Activated CD4-positive, alpha-beta T cell treated with anti-CD3 and anti-CD28 coated beads, Interleukin-2, amount 10 ng/mL, durations not matched to agents 24 days and 14 days (primary cell): ENCODE measurements at regions of chr7 and their contacts with region 1.

Region 1: GRCh38 chr7:33109005-33109757 is at the start of gene RP9:
- DNase-seq: peak; percentile 94
- H3K4me3 Mint-ChIP-seq: peak within 1 kb of the TSS; percentile 97
- H3K27ac Mint-ChIP-seq: peak within 1 kb of the TSS; percentile 84
- H3K4me1 Mint-ChIP-seq: peaks cover 25% of the 10 kb centered on the region
- H3K27me3 Mint-ChIP-seq: peaks cover 28% of the 10 kb centered on the region
- total RNA-seq, gene RP9: 23.2 and 25.1 TPM in 2 replicates

Region 2: DNA sequence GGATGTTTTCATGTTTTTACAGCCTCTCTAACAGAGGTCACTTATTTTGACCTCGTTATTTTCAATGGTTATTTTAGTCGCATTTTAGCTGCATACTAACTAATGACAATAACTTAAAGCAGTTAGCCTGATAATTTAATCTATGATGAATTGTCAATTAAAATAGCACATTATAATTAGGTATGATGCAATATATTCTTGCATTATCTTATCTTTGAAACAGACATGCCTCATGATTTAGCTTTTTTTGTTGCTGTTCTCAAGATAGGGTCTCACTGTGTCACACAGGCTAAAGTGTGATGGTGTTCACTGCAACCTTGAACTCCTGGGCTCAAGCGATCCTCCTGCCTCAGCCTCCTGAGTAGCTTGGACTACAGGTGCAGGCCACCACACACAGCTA is 344.0 kb before region 1 on chr7:
- intact Hi-C with region 1: loop called (anchors 2 kb)
- DNase-seq: no peak
- H3K4me3 Mint-ChIP-seq: no peak overlapping the region
- H3K27ac Mint-ChIP-seq: no peak overlapping the region
- H3K4me1 Mint-ChIP-seq: peaks cover 4% of the 10 kb centered on the region
- H3K27me3 Mint-ChIP-seq: peaks cover 66% of the 10 kb centered on the region

Region 3: DNA sequence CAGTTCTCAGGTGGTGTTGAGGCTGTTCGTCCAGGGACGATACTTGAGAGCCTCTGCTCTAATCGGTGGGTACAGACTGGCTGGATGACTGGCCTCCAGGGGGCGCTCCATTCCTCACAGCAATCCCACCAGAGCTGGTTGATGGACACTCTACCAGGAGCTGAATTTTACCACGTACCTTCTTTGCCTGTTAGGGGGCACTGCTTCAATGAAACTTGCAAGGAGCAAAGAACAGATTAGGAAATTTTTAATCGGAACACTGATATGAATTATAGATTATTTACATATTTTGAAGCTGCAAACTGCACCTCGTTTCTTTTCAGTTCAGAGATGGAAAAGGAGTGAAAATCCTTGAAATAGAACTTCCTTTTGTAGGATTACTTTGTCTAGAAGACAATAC is 262.5 kb before region 1 on chr7:
- intact Hi-C with region 1: loop called (anchors 1 kb)
- DNase-seq: peak; percentile 95
- H3K4me3 Mint-ChIP-seq: peak overlapping the region; percentile 26
- H3K27ac Mint-ChIP-seq: no peak overlapping the region
- H3K4me1 Mint-ChIP-seq: peaks cover 9% of the 10 kb centered on the region
- H3K27me3 Mint-ChIP-seq: peaks cover 27% of the 10 kb centered on the region

Region 4: DNA sequence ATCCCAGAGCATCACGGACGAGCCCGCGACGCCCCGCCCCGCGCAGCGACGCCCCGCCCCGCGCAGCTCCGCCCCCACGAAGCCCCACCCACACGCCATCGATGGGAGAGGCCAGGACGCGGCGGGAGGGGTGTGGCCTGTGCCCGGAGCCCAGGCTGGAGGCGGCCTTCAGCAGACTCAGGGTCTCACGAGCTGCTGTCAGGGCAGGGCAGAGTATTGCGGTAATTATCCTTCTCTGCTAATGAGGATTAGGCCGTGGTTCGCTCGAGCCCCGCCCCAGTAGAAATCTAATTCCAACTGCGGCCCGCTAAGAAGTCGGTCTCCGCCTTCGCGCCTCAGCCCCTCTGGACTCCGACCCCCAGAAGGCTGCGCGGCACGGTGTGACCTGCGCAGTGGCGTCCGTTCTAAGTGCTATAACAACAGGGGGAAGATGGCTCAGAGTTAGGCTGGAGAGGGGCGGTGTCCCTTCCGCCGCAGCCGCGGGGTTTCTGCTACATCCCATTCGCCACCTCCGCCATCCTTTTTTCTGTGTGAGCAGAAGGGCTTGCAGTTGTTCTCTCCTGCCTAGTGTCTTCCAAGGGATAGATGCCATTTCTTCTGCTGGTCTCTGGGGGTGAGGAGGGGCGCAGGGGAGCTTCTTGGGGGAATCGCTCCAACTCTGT is 46.3 kb before region 1 on chr7:
- intact Hi-C with region 1: loop called (anchors 1 kb)
- DNase-seq: peak; percentile 97
- H3K4me3 Mint-ChIP-seq: peak overlapping the region; percentile 97
- H3K27ac Mint-ChIP-seq: peak overlapping the region; percentile 93
- H3K4me1 Mint-ChIP-seq: peaks cover 30% of the 10 kb centered on the region
- H3K27me3 Mint-ChIP-seq: peaks cover 3% of the 10 kb centered on the region